ENCODE measurements at regions of chr6 and their contacts with region 1.

Region 1: GRCh38 chr6:33344701-33345697 is 27.5 kb upstream of the ZBTB22 start:
- DNase-seq: peak; percentile 91
- ATAC-seq: peak; percentile 31
- H3K4me3 ChIP-seq: peak overlapping the region in 4 of 5 experiments; percentile 13 to 59 (median 42)
- H3K4me3 Mint-ChIP-seq: peak overlapping the region; percentile 81
- H3K27ac ChIP-seq: peak overlapping the region; percentile 92 to 93
- H3K27ac Mint-ChIP-seq: peak overlapping the region; percentile 94
- H3K4me1 ChIP-seq: peaks cover 40 to 50% of the 10 kb centered on the region in 2 donors
- H3K4me1 Mint-ChIP-seq: peaks cover 36% of the 10 kb centered on the region
- H3K27me3 ChIP-seq: no peaks in the 10 kb centered on the region
- H3K27me3 Mint-ChIP-seq: no peaks in the 10 kb centered on the region
- CTCF ChIP-seq: peak; percentile 79

Region 2: DNA sequence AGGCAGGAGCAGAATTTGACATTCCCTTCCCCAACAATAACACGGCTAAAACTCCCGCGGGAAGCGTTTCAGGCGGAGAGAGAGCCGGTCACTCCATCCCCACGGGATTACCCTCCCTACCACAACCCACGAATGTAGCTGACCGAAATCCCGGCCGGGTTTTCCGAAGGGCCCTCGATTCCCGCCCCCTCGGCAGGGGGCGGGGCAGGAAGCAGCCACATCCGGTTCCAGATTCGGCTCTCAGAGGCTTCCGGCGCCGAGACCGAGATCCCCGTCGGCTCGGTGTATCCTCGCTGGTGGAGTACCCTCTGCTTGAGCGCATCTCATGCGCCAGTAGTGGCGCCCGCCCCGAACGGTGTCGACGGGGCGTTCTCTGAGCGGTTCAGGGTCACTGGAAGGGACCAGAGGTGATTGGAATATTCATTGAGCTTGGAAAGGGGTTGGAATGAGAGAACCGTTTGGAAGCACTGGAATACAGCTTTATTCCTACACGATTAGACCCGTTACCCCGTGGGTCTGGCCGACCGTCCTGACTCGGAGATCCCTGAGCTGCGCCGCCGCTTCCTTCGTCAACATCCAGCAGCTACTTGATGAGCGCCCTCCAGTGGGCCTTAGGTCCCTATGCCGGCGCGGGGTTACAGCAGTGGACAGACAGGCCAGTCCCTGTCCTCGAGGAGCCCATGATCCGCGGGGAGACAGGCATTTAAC is 45.6 kb before region 1 on chr6:
- CTCF ChIA-PET with region 1: interaction called, 45 read pairs
- POLR2A ChIA-PET with region 1: interaction called, 17 read pairs
- intact Hi-C with region 1: loop called (anchors 1 kb)
- DNase-seq: peak; percentile 95
- ATAC-seq: peak; percentile 68
- H3K4me3 ChIP-seq: peak overlapping the region; percentile 71 to 96 (median 79)
- H3K4me3 Mint-ChIP-seq: peak overlapping the region; percentile 99
- H3K27ac ChIP-seq: peak overlapping the region; percentile 86 to 91
- H3K27ac Mint-ChIP-seq: peak overlapping the region; percentile 99
- H3K4me1 ChIP-seq: peaks cover 12 to 24% of the 10 kb centered on the region in 2 donors
- H3K4me1 Mint-ChIP-seq: peaks cover 38% of the 10 kb centered on the region
- H3K27me3 ChIP-seq: no peaks in the 10 kb centered on the region
- H3K27me3 Mint-ChIP-seq: no peaks in the 10 kb centered on the region
- CTCF ChIP-seq: peak; percentile 69

Measured in B cell (primary cell).